Head of caudate nucleus (tissue), 42 donors: ENCODE measurements at regions of chr2 and their contacts with region 1.

Region 1: DNA sequence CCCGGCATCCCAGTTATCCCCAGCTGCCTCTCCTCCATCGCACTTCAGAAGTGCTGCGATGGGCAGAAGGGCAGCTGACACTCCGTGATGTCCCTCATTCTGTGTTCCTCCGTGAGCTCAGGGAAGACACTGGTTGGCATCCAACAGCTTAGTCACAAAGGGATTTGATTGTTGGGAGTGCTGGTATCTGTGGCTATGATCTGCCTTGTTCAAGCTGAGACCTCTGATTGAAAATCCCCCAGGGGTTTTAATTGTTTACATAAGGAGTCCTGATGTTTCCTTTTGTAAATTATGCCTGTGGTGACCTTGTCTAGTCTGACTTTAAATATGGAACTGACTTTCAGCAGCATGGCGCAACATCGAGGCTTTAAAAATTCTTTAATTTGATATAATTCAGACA is 18.9 kb upstream of the SAG start:
- DNase-seq: peak in 25 of 42 donors; percentile 11 to 74 (median 39)

Region 2: DNA sequence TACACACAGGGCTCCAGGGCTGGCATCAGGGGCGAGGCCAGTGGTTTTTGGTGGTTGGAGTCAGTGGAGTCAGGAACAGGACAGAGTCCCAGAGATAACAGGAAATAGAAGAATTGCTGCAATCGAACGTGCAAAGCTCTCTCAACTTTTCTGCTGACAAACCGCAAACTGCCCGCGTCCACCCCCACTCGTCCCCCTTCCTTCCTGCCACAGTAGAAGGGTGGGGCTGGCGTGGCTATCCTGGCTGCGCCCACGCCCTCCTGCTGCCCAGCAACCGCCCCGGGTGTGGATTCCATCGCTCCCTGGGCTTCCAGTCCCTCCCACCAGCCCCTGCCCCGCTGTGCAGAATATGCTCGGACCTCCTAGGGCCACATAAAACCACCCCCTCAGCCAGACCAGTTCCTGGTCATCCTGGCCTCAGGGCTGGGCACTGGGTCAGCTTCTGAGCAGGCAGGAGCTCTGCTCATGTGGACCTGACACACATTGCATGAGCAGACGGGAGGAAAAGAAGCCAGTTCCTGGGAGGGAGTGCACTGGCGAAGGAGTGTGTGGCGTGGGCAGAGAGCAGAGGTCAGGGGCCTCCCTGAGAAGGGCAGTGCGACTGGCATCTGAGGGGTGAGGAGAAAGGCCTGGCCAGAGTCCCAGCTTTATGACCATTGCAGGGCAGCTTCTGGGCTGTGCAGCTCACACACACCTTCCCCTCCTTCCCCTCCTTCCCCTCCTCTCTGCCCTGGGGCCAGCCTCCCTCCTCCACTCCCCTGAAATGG is 122.6 kb before region 1 on chr2:
- intact Hi-C with region 1: no loop called
- DNase-seq: peak in 4 of 42 donors; percentile 14 to 42 (median 32)

Region 3: GRCh38 chr2:233443468-233444183 is 154.9 kb after region 1 on chr2:
- intact Hi-C with region 1: loop called (anchors 10 kb)
- DNase-seq: peak; percentile 65 to 92 (median 80)